ENCODE measurements at regions of chr17 and their contacts with region 1.

Region 1: GRCh38 chr17:48791128-48792032 is 25.6 kb downstream of the TTLL6 start:
- DNase-seq: peak; percentile 87

Region 2: GRCh38 chr17:48671697-48672171 is 119.6 kb before region 1 on chr17:
- intact Hi-C with region 1: loop called (anchors 2 to 5 kb)
- DNase-seq: peak; percentile 94

Region 3: DNA sequence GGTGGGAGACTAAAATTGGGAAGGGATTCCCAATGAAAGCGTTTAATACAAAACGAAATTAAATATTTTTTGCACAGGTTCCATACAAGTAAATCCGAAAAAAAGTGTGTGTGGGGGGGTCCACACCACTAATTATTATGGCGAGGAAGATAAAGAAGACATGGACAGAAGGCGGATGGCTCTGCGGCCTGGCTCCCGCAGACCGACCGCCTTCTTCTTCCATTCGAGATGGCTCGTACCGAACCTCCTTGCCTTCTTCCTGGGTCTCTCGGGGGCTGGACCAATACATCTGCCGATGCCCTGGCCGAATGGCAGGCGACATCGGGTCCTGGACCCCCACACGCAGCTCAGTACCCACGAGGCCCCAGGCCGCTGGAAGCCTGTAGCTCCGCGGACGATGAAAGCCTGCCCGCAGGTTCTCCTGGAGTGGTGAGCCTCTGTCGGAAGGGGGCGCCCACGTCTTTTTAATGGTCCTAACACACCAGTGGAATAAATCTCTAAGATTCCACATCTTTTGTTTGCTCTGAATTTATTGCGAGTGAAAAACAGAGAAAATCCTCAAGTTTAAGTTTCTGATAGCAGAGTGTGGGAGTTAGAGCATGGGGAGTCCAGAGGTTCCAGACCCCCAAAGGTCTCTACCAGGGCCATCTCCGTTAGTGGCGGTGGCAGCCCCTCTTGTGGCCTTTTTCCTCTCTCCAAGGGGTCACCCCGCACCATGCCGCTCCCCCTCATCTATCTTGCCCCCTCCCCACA is 67.0 kb before region 1 on chr17:
- intact Hi-C with region 1: loop called (anchors 2 to 5 kb)
- DNase-seq: peak; percentile 96